ENCODE measurements at regions of chr11 and their contacts with region 1.

Region 1: DNA sequence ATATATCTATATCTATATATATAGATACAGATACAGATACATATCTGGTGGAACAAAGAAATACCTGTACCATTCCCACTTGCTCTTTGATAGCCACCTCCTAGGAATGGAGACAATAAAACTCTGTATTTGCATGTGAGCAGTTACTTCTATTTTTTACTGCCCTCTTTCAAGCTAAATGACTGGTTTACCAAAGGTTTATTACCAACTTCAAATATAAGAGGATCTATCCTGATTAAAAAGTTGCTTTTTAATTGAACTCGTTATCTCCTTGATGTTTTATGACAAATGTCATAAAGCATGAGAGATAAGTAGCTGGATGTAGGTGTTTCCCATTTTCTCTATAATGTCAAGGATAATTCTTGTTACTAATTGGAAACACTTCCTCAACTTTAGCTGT is 21.7 kb upstream of the GRIK4 start:
- DNase-seq: no peak
- ATAC-seq: no peak
- H3K4me3 ChIP-seq: no peak overlapping the region
- H3K27ac ChIP-seq: no peak overlapping the region
- H3K4me1 ChIP-seq: no peaks in the 10 kb centered on the region
- H3K27me3 ChIP-seq: no peaks in the 10 kb centered on the region
- CTCF ChIP-seq: no peak
- POLR2A ChIP-seq: no peak

Region 2: GRCh38 chr11:120324932-120325810 is 164.6 kb before region 1 on chr11 and contains the start of gene TLCD5:
- in situ Hi-C with region 1: no loop called
- intact Hi-C with region 1: loop called (anchors 5 kb)
- DNase-seq: no peak
- ATAC-seq: peak; percentile 39 to 65
- H3K4me3 ChIP-seq: peak within 1 kb of the TSS; percentile 49 to 78 (median 62)
- H3K27ac ChIP-seq: peak within 1 kb of the TSS; percentile 66 to 85 (median 78)
- H3K4me1 ChIP-seq: peaks cover 4 to 6% of the 10 kb centered on the region in 2 donors
- H3K27me3 ChIP-seq: peaks cover 0 to 17% (median 0%) of the 10 kb centered on the region in 3 donors
- CTCF ChIP-seq: no peak
- POLR2A ChIP-seq: peak; percentile 36 to 56
- total RNA-seq, gene TLCD5: 0.27 to 1.0 (median 0.70) TPM

Region 3: GRCh38 chr11:120527111-120527761 is 37.4 kb after region 1 on chr11:
- in situ Hi-C with region 1: no loop called
- intact Hi-C with region 1: no loop called
- DNase-seq: no peak
- ATAC-seq: no peak
- H3K4me3 ChIP-seq: no peak overlapping the region
- H3K27ac ChIP-seq: no peak overlapping the region
- H3K4me1 ChIP-seq: no peaks in the 10 kb centered on the region
- H3K27me3 ChIP-seq: peaks cover 0 to 5% (median 3%) of the 10 kb centered on the region in 3 donors
- CTCF ChIP-seq: no peak
- POLR2A ChIP-seq: no peak

Measured in gastrocnemius medialis (tissue), 4 donors.